Activated CD4-positive, alpha-beta T cell treated with anti-CD3 and anti-CD28 coated beads, Interleukin-2, amount 10 ng/mL, durations not matched to agents 24 days and 14 days (primary cell): ENCODE measurements at regions of chr1 and their contacts with region 1.

Region 1: DNA sequence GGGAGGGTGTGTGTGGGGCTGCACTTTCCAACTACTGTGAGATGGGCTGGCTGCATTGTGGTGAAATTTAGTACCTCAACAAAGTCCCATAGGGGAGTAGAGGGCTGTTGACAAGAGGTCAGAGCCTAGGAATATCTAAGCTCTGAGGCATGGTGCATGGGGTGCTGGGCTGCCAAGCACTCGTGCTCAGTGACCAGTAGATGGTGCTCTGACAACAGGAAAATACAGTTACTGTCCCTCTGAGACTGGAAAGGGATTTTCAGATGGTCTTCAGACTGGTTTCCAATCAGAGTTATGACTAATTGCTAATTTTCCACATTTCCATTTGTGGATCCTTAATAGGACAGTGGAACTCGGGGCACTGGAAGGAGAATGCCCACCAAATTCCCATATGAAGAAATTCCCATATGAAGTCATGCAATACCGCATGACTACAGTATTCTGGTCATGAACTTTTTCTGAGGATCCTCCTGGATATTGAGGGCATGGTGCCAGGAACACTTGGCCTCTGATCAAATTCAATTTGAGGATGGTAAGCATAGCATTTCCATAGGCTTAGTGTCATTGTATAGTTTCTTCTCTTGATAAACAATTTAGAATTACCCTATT is 4.1 kb upstream of the CACNA1E start:
- DNase-seq: peak; percentile 79
- H3K4me3 Mint-ChIP-seq: no peak overlapping the region
- H3K27ac Mint-ChIP-seq: no peak overlapping the region
- H3K4me1 Mint-ChIP-seq: peaks cover 7% of the 10 kb centered on the region
- H3K27me3 Mint-ChIP-seq: peaks cover 36% of the 10 kb centered on the region

Region 2: GRCh38 chr1:180229974-180230790 is 1249.1 kb before region 1 on chr1 and contains the start of gene LHX4:
- intact Hi-C with region 1: loop called (anchors 10 kb)
- DNase-seq: peak; percentile 74
- H3K4me3 Mint-ChIP-seq: peak within 1 kb of the TSS; percentile 79
- H3K27ac Mint-ChIP-seq: no peak within 1 kb of the TSS
- H3K4me1 Mint-ChIP-seq: peaks cover 20% of the 10 kb centered on the region
- H3K27me3 Mint-ChIP-seq: peaks cover 75% of the 10 kb centered on the region
- total RNA-seq, gene LHX4: not detected in 2 replicates

Region 3: GRCh38 chr1:181936768-181937581 is 457.7 kb after region 1 on chr1:
- intact Hi-C with region 1: loop called (anchors 2 kb)
- DNase-seq: peak; percentile 76
- H3K4me3 Mint-ChIP-seq: no peak overlapping the region
- H3K27ac Mint-ChIP-seq: no peak overlapping the region
- H3K4me1 Mint-ChIP-seq: no peaks in the 10 kb centered on the region
- H3K27me3 Mint-ChIP-seq: peaks cover 6% of the 10 kb centered on the region

Region 4: DNA sequence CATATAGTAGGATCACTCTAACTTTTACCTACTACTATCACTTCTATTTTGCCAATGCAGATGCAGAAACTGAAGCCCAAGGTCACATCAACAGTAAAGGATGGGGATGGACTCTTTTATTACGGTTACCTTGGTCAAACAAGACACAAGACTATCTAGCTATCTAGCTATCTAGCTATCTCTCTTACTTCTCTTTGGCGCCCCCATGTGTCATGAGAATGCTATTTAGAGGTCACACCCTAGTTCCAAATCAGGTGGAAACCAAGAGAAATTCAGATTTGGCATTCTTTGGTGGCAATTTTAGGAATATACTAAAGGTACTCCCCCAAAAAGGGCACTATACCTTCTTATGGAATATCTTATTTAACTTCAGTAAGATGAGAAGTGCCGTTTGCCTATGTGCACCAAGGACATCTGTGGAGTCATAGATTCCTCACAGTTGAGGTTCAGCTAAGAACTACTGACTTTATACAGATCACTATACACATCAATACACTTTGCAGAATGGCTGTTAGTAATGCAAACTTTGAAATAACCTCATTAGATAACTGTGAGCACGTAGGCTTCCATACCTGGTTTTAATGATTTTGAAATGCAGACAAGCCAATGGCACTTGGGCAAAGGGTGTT is 575.6 kb after region 1 on chr1:
- intact Hi-C with region 1: loop called (anchors 2 kb)
- DNase-seq: peak; percentile 90
- H3K4me3 Mint-ChIP-seq: no peak overlapping the region
- H3K27ac Mint-ChIP-seq: no peak overlapping the region
- H3K4me1 Mint-ChIP-seq: peaks cover 23% of the 10 kb centered on the region
- H3K27me3 Mint-ChIP-seq: peaks cover 30% of the 10 kb centered on the region